PC-3 (cell line): ENCODE measurements at regions of chr3 and their contacts with region 1.

Region 1: DNA sequence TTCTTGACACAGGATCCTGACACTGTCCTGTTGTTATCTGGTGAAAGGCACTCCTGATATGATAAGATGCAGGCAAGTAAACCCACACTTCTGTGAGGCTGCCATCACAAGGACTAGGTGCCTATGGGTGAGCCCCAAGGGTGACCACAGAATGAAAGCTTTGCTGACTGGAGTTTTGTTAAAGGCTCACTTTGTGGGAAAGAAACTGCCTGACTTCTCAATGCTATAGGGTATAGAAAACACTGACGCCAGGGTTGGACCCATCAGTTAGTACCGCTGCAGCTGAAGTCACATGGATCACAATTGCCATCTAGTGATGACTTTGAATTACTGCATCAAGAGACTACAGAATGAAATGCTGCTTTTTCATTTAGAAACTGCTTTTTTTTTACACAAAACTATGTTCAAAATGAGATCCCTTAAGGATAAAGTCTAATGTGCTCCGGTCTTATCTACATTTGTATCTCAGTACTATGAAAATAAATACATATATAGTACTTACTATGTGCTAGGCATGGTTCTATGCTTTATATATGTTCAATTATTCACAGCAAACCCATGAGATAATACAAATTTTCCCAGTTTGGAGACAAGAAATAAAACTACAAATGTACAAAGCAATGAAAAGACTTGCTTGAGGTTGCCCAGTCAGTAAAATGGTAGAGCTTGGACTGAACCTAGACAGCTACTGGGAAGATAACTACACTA is 64.2 kb upstream of the CMSS1 start:
- DNase-seq: peak; percentile 82
- ATAC-seq: peak; percentile 81
- H3K4me3 ChIP-seq: no peak overlapping the region
- H3K27ac ChIP-seq: no peak overlapping the region
- H3K4me1 ChIP-seq: peaks cover 25% of the 10 kb centered on the region
- H3K27me3 ChIP-seq: no peaks in the 10 kb centered on the region
- CTCF ChIP-seq: peak; percentile 95

Region 2: DNA sequence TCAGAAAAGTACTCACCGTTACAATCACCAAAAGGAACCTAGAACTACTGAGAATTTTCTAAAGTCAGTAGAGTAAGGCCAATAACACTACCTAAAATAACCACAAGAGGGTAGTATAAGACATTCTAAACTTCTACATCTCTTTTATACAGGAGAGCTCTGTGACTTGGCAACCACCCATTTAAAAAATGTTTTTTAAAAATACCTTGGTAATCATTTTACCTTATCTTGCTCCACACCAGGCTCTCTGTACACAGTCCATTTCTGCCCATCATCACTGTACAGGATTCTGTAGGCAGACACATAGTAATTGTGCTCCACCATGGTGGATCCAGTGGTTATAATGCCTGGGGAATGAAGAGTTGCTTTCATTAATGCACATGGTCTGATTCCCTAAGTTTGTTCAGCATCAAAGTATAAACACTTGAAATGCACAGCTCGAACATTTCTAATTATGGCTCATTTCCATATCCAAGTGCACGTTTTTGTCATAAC is 935.8 kb before region 1 on chr3:
- CTCF ChIA-PET with region 1: no interaction called
- POLR2A ChIA-PET with region 1: no interaction called
- intact Hi-C with region 1: loop called (anchors 1 kb)
- DNase-seq: peak; percentile 89
- ATAC-seq: peak; percentile 42
- H3K4me3 ChIP-seq: no peak overlapping the region
- H3K27ac ChIP-seq: peak overlapping the region; percentile 21
- H3K4me1 ChIP-seq: peaks cover 31% of the 10 kb centered on the region
- H3K27me3 ChIP-seq: no peaks in the 10 kb centered on the region
- CTCF ChIP-seq: peak; percentile 84

Region 3: DNA sequence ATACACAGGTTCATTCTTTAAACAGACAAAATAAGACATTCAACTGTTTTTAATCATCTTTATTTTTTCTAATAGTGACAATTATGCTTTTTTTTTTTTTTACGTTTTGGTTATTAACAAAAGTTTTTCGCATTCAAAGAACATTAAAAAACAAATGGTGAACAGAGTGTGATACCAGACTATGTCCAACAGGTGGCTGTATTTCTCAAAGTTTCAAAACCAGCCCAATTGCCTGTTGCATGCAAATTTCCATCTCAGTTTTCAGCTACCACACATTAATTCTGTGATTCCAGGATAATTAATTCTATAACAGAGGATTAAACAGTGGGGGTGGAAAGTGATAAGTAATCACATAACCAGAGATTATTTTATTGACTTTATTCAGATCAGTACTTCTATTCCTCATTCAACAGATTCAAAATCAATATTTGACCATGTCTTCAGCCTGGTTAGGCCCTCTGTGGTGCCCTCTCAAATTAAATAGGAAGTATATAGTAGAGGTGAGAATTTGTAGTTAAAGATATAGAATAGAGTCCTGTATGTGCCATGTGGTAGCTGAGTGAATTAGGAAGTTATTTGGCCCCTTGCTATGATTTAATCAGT is 729.7 kb before region 1 on chr3:
- CTCF ChIA-PET with region 1: interaction called, 7 read pairs
- POLR2A ChIA-PET with region 1: no interaction called
- intact Hi-C with region 1: loop called (anchors 1 kb)
- DNase-seq: peak; percentile 73
- ATAC-seq: no peak; the same call in 1 of the 2 replicates
- H3K4me3 ChIP-seq: no peak overlapping the region
- H3K27ac ChIP-seq: no peak overlapping the region
- H3K4me1 ChIP-seq: no peaks in the 10 kb centered on the region
- H3K27me3 ChIP-seq: no peaks in the 10 kb centered on the region
- CTCF ChIP-seq: peak; percentile 91

Region 4: DNA sequence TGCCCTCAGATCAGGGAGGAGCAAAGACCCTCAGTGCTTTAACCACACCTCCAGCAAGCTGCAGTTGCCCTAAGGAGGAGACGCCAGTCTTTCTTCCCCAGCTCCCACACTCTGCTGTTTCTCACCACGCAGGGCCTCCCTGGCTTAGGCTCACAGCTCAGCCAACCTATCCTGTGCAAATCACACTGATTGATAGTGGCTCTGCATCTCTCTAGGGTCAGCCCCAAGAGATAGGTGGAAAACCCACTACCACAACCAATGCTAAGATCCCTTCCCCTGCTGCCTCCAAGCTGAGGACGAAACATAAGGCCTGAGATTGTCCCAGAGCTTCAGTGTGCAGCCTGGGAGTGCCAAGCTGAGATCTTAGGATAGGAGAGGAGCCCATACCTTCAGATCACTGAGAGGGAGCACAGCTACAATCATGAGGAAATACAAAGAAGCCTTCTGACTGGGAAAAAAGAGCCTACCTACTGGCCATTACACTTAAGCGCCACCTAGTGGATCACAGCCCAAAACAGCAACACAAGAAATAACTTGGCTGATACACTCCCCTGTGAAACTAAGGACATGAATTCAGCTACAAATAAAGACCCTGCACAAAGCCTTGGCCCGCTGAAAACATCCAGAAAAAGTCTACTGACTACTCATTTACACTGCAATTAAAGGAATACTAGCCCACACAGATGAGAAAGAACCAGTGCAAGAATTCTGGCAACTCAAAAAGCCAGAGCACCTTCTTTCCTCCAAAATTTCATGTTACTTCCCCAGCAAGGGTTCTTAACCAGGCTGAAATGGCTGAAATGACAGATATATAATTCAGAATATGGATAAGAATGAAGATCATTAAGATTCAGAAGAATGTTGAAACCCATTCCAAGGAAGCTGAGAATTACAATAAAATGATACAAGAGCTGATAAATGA is 580.4 kb before region 1 on chr3:
- CTCF ChIA-PET with region 1: interaction called, 3 read pairs
- POLR2A ChIA-PET with region 1: no interaction called
- intact Hi-C with region 1: loop called (anchors 2 kb)
- DNase-seq: peak; percentile 84
- ATAC-seq: peak; percentile 79
- H3K4me3 ChIP-seq: no peak overlapping the region
- H3K27ac ChIP-seq: no peak overlapping the region
- H3K4me1 ChIP-seq: no peaks in the 10 kb centered on the region
- H3K27me3 ChIP-seq: no peaks in the 10 kb centered on the region
- CTCF ChIP-seq: peak; percentile 94

Region 5: GRCh38 chr3:99532246-99532645 is 221.2 kb before region 1 on chr3:
- CTCF ChIA-PET with region 1: interaction called, 3 read pairs
- POLR2A ChIA-PET with region 1: no interaction called
- intact Hi-C with region 1: loop called (anchors 1 kb)
- DNase-seq: peak; percentile 93
- ATAC-seq: peak; percentile 91
- H3K4me3 ChIP-seq: no peak overlapping the region
- H3K27ac ChIP-seq: no peak overlapping the region
- H3K4me1 ChIP-seq: peaks cover 11% of the 10 kb centered on the region
- H3K27me3 ChIP-seq: no peaks in the 10 kb centered on the region
- CTCF ChIP-seq: peak; percentile 95

Region 6: DNA sequence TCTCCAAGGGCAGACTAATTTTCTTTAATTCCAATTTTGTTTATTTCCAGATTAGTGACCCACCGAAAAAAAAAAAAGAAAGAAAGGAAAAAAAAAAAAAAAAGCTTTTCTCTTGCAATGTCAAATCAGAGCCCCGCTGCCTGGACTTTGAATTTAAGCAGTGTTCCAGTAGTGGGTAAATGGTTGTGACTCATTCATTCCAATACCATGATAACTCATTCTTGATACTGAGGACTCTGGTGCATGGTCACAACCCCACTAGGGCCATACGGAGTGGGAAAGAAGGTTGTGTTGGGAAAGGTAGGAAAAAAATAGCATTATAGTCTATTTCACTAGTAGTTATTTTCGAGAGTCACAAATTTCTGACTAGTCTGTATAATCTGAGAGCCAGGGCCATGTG is 174.2 kb before region 1 on chr3:
- CTCF ChIA-PET with region 1: no interaction called
- POLR2A ChIA-PET with region 1: no interaction called
- intact Hi-C with region 1: no loop called
- DNase-seq: peak; percentile 56
- ATAC-seq: peak; percentile 54
- H3K4me3 ChIP-seq: no peak overlapping the region
- H3K27ac ChIP-seq: no peak overlapping the region
- H3K4me1 ChIP-seq: no peaks in the 10 kb centered on the region
- H3K27me3 ChIP-seq: no peaks in the 10 kb centered on the region
- CTCF ChIP-seq: no peak

Region 7: DNA sequence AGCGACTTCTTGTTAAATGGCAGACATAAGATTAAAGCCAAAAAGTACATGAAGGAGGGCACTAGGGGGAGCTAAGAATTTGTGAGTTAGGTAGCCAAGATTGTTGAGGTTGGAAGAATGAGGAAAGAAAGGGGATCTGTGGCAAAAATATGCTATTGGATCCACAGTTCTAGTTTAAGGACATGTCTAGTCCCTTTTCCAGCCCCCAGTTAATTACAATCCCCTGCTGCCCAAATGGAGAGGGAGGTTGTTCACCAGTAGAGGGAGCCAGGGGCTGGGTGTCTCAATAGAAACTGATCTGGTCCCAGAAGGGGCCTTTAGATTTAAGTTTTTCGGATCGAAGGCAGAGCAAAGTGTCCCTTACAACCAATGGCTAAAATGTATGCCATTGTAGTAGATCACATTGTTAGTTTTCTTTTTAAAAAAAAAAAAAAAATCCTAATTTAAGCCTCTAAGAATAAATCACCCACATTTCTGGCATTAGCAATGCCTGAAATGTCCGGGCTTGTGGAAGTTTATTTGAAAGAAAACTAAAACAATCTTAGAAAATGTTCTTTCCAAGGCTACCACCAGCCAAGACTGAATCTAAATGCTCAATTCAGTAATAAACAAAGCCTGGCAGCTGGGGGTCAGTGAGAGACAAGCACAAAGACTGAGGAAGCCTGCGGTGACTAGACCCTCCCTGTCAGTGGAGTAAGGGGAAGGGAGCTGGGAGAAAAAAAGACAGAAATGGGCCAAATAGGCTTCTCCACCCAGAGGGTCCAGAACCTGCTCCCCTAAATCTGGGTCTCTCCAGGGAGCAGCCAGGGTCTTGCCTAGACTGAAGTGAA is 107.9 kb before region 1 on chr3:
- CTCF ChIA-PET with region 1: interaction called, 5 read pairs
- POLR2A ChIA-PET with region 1: no interaction called
- intact Hi-C with region 1: loop called (anchors 1 kb)
- DNase-seq: peak; percentile 58
- ATAC-seq: no peak
- H3K4me3 ChIP-seq: no peak overlapping the region
- H3K27ac ChIP-seq: no peak overlapping the region
- H3K4me1 ChIP-seq: peaks cover 30% of the 10 kb centered on the region
- H3K27me3 ChIP-seq: no peaks in the 10 kb centered on the region
- CTCF ChIP-seq: peak; percentile 99

Region 8: DNA sequence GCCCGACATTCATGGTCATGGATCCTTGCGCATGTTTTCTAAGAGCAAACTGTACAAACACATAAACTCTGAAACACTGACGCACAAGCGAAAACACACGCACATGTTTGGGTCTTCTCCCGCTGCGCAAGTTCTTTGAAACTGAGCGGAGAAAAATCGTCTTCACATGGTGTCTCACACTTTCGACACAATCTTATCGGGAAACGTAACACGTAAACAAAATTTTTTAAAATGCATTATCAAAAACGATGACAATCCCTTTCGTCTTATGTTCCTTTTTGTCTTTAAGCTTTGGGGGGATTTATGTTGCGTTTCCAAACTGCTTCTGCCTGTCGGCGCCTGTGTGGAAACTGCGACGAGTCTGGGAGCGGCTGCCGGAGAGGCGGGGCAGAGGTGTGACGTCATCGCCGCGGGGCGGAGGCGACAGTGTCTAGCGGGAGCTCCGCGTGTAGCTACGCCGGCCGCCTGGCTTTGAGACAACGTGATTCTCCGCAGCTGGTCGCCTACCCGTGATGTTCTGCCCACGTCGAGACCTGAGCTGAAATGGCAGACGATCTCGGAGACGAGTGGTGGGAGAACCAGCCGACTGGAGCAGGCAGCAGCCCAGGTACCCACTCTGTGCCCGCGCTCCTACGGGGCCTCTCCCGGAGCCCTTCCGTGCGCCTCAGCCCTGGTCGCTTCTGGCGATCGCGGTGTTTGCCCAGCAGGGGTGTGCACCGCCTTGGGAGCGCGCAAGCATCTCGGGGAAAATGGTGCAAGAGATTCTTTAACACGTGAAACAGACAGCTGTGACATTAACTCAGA is 64.2 kb after region 1 on chr3 and contains the start of gene CMSS1:
- CTCF ChIA-PET with region 1: no interaction called
- POLR2A ChIA-PET with region 1: no interaction called
- intact Hi-C with region 1: no loop called
- DNase-seq: peak; percentile 93
- ATAC-seq: peak; percentile 93
- H3K4me3 ChIP-seq: peak within 1 kb of the TSS; percentile 86
- H3K27ac ChIP-seq: peak within 1 kb of the TSS; percentile 69
- H3K4me1 ChIP-seq: peaks cover 20% of the 10 kb centered on the region
- H3K27me3 ChIP-seq: no peaks in the 10 kb centered on the region
- CTCF ChIP-seq: 0 out of 2 replicates have a peak, but pooled peaks have one; percentile 28
- total RNA-seq, gene CMSS1: 51.7 and 63.1 TPM in 2 replicates

Region 9: GRCh38 chr3:99945328-99945995 is 192.0 kb after region 1 on chr3:
- CTCF ChIA-PET with region 1: no interaction called
- POLR2A ChIA-PET with region 1: no interaction called
- intact Hi-C with region 1: no loop called
- DNase-seq: no peak
- ATAC-seq: no peak
- H3K4me3 ChIP-seq: no peak overlapping the region
- H3K27ac ChIP-seq: no peak overlapping the region
- H3K4me1 ChIP-seq: peaks cover 27% of the 10 kb centered on the region
- H3K27me3 ChIP-seq: no peaks in the 10 kb centered on the region
- CTCF ChIP-seq: no peak